ENCODE measurements at regions of chr17 and their contacts with region 1.

Region 1: GRCh38 chr17:47615766-47616424 is 33.8 kb upstream of the KPNB1 start:
- DNase-seq: no peak
- H3K4me3 Mint-ChIP-seq: no peak overlapping the region
- H3K27ac Mint-ChIP-seq: no peak overlapping the region
- H3K4me1 Mint-ChIP-seq: peaks cover 8% of the 10 kb centered on the region
- H3K27me3 Mint-ChIP-seq: no peaks in the 10 kb centered on the region

Region 2: GRCh38 chr17:46878055-46878454 is 737.8 kb before region 1 on chr17:
- CTCF ChIA-PET with region 1: no interaction called
- DNase-seq: no peak
- H3K4me3 Mint-ChIP-seq: no peak overlapping the region
- H3K27ac Mint-ChIP-seq: no peak overlapping the region
- H3K4me1 Mint-ChIP-seq: no peaks in the 10 kb centered on the region
- H3K27me3 Mint-ChIP-seq: no peaks in the 10 kb centered on the region

Region 3: GRCh38 chr17:47363171-47363570 is 252.7 kb before region 1 on chr17:
- CTCF ChIA-PET with region 1: interaction called, 24 read pairs
- DNase-seq: no peak
- H3K4me3 Mint-ChIP-seq: no peak overlapping the region
- H3K27ac Mint-ChIP-seq: no peak overlapping the region
- H3K4me1 Mint-ChIP-seq: no peaks in the 10 kb centered on the region
- H3K27me3 Mint-ChIP-seq: no peaks in the 10 kb centered on the region

Region 4: GRCh38 chr17:47629826-47630225 is 13.9 kb after region 1 on chr17:
- CTCF ChIA-PET with region 1: interaction called, 11 read pairs
- DNase-seq: no peak
- H3K4me3 Mint-ChIP-seq: no peak overlapping the region
- H3K27ac Mint-ChIP-seq: no peak overlapping the region
- H3K4me1 Mint-ChIP-seq: peaks cover 3% of the 10 kb centered on the region
- H3K27me3 Mint-ChIP-seq: no peaks in the 10 kb centered on the region